Right cardiac atrium (tissue), 5 donors: ENCODE measurements at regions of chr16 and their contacts with region 1.

Region 1: GRCh38 chr16:75764154-75764768 is 38.0 kb upstream of the CPHXL start:
- DNase-seq: peak in 2 of 3 donors; percentile 18 to 55
- ATAC-seq: peak; percentile 91 to 92
- H3K4me3 ChIP-seq: no peak overlapping the region
- H3K27ac ChIP-seq: no peak overlapping the region
- H3K4me1 ChIP-seq: no peaks in the 10 kb centered on the region
- H3K27me3 ChIP-seq: no peaks in the 10 kb centered on the region

Region 2: GRCh38 chr16:75478074-75478473 is 286.2 kb before region 1 on chr16:
- intact Hi-C with region 1: loop called in 3 of 4 experiments (anchors 5 to 10 kb)
- DNase-seq: no peak
- ATAC-seq: no peak
- H3K4me3 ChIP-seq: no peak overlapping the region
- H3K27ac ChIP-seq: no peak overlapping the region
- H3K4me1 ChIP-seq: no peaks in the 10 kb centered on the region
- H3K27me3 ChIP-seq: no peaks in the 10 kb centered on the region

Region 3: DNA sequence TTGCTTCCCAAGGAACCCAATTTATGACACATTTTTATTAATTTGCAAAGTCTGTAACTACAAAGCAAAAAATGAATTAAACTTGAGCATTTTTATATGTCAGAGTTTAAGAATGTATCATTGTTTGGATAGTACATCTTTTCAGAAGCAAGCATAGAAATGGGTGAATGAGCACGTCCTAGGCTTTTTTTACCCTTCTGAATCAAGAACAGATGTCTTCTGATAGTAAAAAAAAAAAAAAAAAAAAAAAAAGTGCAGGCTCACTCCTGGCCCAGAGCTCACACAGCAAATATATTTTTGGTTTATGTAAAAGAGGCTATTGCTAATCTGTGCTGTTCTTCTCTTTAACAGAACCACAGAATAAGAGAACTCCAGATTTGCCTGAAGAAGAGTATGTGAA is 110.3 kb before region 1 on chr16:
- intact Hi-C with region 1: loop called in 2 of 4 experiments (anchors 10 kb)
- DNase-seq: no peak
- ATAC-seq: no peak
- H3K4me3 ChIP-seq: no peak overlapping the region
- H3K27ac ChIP-seq: no peak overlapping the region
- H3K4me1 ChIP-seq: peaks cover 2% of the 10 kb centered on the region
- H3K27me3 ChIP-seq: no peaks in the 10 kb centered on the region

Region 4: GRCh38 chr16:75820672-75821071 is 56.4 kb after region 1 on chr16:
- intact Hi-C with region 1: no loop called
- DNase-seq: no peak
- ATAC-seq: no peak
- H3K4me3 ChIP-seq: no peak overlapping the region
- H3K27ac ChIP-seq: no peak overlapping the region
- H3K4me1 ChIP-seq: no peaks in the 10 kb centered on the region
- H3K27me3 ChIP-seq: no peaks in the 10 kb centered on the region

Region 5: DNA sequence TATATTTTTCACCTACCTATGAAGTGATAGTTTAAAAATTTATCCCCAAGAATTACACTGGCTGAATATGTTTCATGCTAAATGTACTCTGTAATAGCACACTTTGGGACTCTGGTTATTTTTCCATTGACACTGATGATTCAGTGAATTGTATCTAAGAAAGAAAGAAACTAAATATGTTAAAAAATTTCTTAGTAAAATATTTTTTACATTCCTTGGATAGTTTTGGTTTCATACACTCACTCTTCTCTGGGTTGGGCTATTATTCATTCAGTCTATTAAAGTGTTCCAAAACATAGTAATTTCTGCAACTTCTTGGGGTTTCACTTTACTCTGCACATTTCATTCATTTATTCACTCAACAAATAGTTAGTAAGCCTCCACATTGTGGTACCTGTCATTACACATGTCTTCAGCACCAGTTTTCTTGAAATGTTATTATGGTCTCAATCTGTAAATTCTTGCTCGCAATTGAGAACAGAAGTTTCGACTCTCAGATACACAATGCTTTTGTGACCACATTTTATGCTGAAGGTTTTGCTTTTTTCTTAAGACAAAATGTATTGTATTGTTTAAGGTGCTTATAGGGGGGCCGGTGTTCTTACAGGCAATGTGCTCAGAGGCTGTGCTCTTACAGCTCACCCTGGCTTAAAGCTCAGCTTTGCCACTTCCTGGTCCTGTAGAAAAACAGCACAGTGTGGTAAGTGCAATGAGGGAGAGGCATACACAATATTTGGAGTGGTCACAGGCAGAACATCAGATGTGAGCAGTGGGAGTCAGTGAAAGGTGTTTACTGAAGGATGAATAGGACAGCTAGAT is 530.3 kb after region 1 on chr16:
- intact Hi-C with region 1: no loop called
- DNase-seq: no peak
- ATAC-seq: no peak
- H3K4me3 ChIP-seq: no peak overlapping the region
- H3K27ac ChIP-seq: no peak overlapping the region
- H3K4me1 ChIP-seq: no peaks in the 10 kb centered on the region
- H3K27me3 ChIP-seq: no peaks in the 10 kb centered on the region